ENCODE measurements at regions of chr6 and their contacts with region 1.

Region 1: GRCh38 chr6:11424395-11425050 is 113.0 kb upstream of the TMEM170B start:
- DNase-seq: no peak
- H3K4me3 Mint-ChIP-seq: no peak overlapping the region
- H3K27ac Mint-ChIP-seq: peak overlapping the region; percentile 7
- H3K4me1 Mint-ChIP-seq: peaks cover 63% of the 10 kb centered on the region
- H3K27me3 Mint-ChIP-seq: no peaks in the 10 kb centered on the region

Region 2: DNA sequence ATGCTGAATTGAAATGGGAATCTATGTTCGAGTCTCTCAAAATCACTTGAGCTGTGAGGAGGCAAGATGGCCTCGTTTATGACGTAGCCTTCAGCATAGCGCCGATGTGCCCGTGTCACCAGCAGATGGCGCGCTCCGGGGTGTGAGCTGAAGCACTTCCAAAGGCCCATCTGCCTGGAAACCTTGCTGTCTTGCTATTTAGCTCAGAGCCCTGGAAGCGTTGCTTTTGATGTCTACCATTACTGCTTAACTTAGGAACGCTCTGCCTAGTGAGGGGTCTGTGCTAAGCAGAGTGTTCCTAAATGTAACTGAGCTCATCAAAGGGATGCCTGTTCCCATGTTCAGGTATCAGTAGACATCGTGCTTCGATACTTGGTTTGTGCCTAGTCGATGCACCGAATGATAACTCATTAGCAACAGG is 469.9 kb before region 1 on chr6:
- intact Hi-C with region 1: no loop called
- DNase-seq: peak; percentile 50
- H3K4me3 Mint-ChIP-seq: no peak overlapping the region
- H3K27ac Mint-ChIP-seq: no peak overlapping the region
- H3K4me1 Mint-ChIP-seq: no peaks in the 10 kb centered on the region
- H3K27me3 Mint-ChIP-seq: peaks cover 7% of the 10 kb centered on the region

Region 3: DNA sequence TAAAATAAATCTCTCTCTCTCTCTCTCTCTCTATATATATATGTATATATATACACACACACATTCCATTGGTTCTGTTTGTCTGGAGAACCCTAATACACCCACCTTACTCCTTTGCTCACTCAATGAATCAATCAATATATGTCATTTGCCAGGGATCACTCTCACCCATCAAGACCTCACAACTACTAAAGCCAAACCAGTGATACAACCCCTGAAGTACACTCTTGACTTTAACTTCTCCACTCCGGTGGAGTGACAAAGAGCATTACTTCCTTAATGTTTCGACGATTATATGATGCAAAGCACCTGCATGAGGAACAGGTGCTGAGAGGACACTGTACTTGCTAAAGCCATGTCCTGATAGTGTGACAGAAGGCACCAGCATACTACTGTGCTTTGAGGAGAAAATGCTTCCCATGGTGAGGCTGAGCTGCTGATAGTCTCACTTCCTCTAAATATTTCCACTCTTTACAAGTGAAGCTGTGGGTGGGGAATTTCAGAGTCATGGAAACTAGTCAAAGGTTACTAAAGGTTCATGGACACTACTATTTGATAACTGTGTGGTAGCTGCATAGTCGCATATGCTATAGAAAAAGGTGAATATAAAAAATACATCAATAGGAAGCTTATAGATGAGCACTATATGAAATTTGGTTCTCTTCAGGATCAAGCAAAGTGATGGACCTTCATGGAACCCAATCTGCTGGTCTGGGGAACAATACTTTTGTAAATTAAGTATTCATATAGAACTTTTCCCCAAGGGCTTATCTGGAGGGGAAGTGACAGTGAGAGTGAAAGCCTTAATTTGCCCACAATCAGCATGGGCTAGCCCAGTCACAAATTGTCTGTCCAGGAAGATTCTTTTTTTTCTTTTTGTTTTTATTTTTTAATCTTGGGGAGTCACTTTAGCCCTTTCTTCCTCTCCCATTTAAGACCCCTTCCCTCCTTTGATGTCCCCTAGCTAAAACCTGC is 50.2 kb before region 1 on chr6:
- intact Hi-C with region 1: loop called (anchors 2 kb)
- DNase-seq: no peak
- H3K4me3 Mint-ChIP-seq: peak overlapping the region; percentile 65
- H3K27ac Mint-ChIP-seq: peak overlapping the region; percentile 94
- H3K4me1 Mint-ChIP-seq: peaks cover 72% of the 10 kb centered on the region
- H3K27me3 Mint-ChIP-seq: no peaks in the 10 kb centered on the region

Region 4: DNA sequence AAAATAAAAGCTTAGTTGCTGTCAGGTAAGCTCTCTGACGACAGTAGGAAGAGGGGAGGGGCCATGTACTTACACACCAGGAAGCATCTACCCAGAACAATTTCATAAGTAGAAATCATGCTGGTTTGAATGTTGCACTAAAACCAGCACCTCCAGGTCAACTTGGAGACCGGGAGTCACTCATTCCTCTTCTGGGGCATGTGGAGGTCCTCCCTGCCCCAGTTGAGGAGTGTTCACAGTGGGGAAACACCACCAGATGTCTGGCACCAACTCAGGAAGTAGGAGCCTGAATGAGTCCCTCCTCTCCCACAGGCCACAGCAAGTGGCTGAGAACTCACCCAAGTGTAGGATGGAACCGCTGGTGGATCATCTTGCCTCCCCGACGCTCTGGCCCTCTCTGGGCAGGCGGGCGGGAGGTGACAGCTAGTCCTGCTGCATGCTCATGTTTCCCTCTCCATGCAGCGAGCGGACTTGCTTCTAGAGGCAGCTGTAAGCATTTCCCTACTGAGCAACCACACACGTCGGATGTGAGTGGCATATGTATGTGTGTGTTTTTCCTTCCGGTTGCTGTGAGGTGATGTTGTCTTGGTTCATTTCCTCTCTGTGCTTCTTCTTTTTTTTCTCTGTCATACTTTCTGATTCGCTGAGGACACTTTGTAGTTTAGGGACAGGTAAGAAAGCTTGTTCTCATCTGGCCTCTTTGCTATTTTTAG is 42.6 kb before region 1 on chr6:
- intact Hi-C with region 1: loop called (anchors 2 kb)
- DNase-seq: peak; percentile 69
- H3K4me3 Mint-ChIP-seq: peak overlapping the region; percentile 92
- H3K27ac Mint-ChIP-seq: peak overlapping the region; percentile 96
- H3K4me1 Mint-ChIP-seq: peaks cover 75% of the 10 kb centered on the region
- H3K27me3 Mint-ChIP-seq: no peaks in the 10 kb centered on the region

Region 5: DNA sequence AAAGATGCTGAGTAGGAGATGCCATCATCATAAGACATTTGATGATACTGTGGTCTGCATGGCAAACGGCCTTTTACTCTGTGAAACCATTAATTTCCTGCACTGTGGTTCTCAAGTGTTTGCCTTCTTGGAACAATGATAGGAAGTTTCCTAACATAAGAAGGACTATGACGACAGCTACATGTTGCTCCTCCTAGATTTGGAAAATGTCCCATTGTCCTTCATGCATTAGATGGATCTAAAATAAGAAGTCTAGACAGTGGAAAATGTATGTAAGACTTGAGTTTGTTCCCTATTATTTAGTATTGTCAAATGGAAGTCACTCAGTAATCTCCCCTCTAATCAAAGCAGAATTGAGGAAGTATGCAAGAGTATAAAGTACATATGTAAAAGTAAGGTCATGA is 14.5 kb after region 1 on chr6:
- intact Hi-C with region 1: loop called (anchors 2 kb)
- DNase-seq: no peak
- H3K4me3 Mint-ChIP-seq: no peak overlapping the region
- H3K27ac Mint-ChIP-seq: peak overlapping the region; percentile 21
- H3K4me1 Mint-ChIP-seq: peaks cover 23% of the 10 kb centered on the region
- H3K27me3 Mint-ChIP-seq: no peaks in the 10 kb centered on the region

Region 6: DNA sequence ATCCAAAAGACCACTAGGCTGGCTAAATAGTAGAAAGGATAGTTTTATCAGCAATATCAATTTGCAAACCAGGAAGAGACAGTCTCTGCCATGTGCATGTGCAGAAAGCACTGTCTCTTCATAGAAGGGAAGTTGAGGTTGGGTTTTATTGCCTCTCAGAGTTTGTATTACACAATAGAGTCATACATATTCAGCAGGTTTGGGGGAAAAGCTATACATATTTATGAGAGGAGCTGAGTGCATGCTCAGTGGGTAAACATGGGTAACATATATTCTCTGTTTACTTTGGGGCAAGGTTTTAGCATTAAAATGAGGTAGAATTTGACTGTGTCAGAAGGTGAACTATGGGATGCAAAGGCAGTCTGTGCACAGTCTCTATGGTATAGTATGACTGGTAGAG is 127.9 kb after region 1 on chr6:
- intact Hi-C with region 1: no loop called
- DNase-seq: no peak
- H3K4me3 Mint-ChIP-seq: no peak overlapping the region
- H3K27ac Mint-ChIP-seq: no peak overlapping the region
- H3K4me1 Mint-ChIP-seq: no peaks in the 10 kb centered on the region
- H3K27me3 Mint-ChIP-seq: peaks cover 5% of the 10 kb centered on the region

Measured in activated T-helper 1 cell treated with anti-CD3 and anti-CD28 coated beads, Interleukin-12 subunit alpha, Interleukin-12 subunit beta, Interleukin-2, Interleukin-4 antibody, amounts not matched to agents 30 ng/mL and 10 ng/mL and 1 ng/mL, durations not matched to agents 14 hours and 24 hours and 36 hours (primary cell).